ENCODE measurements at regions of chr1 and their contacts with region 1.

Region 1: DNA sequence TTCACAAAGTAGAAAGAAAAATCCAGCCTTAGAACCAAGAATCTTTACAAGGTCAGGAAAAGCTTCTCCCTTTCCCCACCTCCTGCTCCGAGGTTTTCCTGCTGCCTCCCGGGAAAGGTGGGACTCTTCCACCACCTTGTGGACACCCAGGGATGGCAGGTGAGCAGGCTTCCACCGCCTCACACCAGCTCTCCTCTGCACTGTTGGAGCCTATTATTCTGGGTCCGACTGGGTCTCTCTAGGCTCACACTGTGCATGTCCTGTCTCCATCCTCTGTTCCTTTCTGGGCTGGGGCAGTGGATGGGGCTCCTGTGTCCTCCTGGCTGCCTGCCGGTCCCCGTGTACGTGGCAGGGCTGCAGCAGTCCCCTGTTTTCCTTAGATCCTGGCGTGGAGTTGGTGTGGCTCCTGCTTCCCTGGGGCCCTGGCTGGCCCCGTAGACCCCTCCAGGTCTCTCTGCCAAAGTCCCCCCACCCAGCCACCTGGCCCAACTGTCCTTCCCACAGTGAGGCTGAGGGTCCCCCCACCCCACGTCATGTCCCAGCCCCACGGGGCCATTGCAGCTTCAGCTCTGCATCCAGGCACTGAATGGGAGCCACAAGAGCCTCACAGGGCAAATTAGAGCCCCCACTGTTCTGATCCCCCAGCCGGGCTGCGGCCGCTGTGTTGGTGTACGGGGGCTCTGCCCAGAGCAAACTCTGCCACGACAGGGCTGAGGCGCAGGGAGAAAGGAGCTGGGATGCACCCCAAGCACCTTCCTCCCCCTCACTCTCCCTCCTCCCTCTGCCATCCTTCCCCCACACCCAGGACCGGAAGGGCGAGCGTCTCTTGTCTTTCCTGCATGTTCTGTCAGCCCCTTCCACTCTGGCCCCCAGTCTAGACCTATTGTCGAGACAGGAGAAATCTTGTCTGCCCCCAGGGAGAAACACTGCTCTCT is 3.3 kb upstream of the SLC45A1 start:
- DNase-seq: peak; percentile 69 to 79
- ATAC-seq: peak; percentile 94

Region 2: DNA sequence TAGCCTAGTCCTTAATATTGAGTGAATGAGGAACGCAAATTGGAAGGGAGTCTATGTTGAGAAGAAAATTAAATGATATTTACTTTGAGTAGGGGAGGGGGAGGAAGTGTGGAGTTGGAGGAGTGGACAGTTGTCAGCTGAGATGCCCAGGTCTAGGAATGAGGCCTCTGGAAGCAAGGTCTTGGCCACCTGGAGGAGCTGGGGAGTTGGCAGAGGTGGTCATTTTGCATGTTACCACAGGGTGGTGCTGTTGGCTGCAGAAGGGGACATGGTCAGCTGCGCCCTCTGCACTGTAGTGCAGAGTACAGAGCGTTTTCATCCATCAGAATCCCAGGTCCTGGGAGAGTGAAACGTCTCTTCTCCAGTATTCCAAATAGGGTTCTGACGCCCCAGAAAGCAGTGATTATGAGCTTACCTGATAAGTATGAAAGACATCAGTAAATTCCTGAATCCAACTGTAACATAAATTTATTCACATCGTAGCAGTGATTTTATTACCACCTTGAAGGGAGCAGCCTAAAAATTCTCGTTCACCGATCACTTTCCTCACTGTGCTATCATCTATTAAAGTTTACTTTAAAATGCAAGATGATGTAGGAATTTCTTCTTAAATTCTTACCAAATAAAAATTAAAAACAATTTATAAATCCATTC is 339.3 kb before region 1 on chr1:
- intact Hi-C with region 1: loop called (anchors 5 to 10 kb)
- DNase-seq: peak; percentile 62 to 74
- ATAC-seq: peak; percentile 99

Region 3: GRCh38 chr1:7989762-7990428 is 324.7 kb before region 1 on chr1:
- intact Hi-C with region 1: loop called in 1 of 2 experiments (anchors 10 kb)
- DNase-seq: no peak
- ATAC-seq: no peak

Region 4: DNA sequence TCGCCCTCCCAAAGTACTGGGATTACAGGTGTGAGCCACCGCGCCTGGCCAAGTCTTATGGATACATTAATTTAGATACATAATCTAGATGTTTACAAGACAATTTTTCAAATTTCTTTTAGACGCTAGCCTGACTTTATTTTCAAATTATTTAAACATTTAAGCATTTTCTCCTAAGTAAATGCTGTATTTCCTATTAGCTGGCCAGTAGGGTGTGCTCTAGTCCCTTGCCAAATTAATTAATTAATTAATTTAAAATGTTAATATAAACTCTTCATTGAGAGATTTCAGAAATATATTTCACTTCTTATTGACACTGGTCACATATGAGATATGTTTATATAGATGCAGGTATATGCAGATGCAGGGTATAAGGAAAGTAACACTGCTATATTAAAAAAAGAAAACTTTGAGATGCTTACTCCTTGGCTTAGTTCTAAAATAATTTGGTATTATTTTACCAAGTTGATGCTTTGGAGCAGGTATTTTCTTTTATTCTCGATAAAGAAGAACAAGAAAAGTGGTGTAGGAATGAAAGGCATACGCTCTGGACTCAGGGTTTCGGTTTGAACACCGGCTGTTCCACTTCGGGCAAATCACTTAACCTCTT is 283.3 kb before region 1 on chr1:
- intact Hi-C with region 1: loop called (anchors 5 to 10 kb)
- DNase-seq: no peak
- ATAC-seq: no peak

Region 5: DNA sequence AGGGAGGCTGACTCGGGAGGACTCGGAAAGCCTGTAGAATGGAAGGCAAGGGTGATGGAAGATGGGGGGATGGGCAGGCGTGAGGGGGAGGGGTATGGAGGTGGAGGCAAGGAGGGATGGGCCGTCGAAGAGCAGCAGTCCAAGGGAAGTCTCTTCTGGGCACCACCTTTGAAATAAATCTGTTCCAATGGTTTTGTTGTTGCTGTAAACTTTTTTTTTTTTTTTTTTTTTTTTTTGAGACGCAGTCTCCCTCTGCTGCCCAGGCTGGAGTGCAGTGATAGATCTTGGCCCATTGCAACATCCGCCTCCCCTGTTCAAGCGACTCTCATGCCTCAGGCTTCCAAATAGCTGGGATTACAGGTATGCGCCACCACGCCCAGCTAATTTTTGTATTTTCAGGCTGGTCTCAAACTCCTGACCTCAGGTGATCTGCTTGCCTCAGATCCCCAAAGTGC is 75.7 kb before region 1 on chr1:
- intact Hi-C with region 1: no loop called
- DNase-seq: peak; percentile 46 to 58
- ATAC-seq: peak; percentile 62

Region 6: GRCh38 chr1:8516793-8517556 is 202.4 kb after region 1 on chr1:
- intact Hi-C with region 1: no loop called
- DNase-seq: no peak
- ATAC-seq: no peak

Measured in left colon (tissue), 2 donors.